ENCODE measurements at regions of chr5 and their contacts with region 1.

Region 1: DNA sequence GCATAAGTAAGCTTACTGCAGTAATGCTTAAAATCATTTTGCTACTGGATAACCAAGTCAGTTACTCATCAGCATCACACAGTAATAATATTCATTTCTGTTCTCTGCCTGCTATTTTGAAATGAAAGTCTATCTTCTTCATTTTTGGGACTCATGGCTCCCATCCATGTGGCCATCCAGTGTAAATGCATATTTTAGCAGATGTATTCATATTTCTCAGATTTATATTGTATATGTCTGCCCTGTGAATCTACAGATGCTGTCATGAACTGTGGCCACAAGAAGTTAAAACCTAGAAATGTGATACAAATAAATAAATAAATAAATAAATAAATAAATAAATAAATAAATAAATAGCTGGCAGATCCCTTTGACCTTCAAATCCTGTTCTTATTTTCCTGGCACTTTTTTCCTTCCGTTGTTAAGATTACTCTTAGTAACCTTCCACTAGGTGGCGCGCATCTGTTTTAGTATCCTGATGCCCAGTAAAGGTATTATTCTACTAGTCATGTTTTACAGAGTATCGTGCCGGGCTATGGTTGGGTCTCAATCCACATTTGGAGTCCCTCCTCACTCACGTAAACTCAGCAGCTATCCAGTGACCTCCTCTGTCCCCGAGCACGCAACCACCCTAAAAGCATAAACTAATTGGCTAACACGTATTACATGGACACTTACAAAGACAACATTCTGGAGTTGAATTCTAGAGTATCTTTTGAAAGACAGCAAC is 79.2 kb upstream of the IL7R start:
- DNase-seq: peak; percentile 88
- ATAC-seq: peak; percentile 48
- H3K4me3 Mint-ChIP-seq: peak overlapping the region; percentile 3
- H3K27ac Mint-ChIP-seq: peak overlapping the region; percentile 91
- H3K4me1 Mint-ChIP-seq: peaks cover 67% of the 10 kb centered on the region
- H3K27me3 Mint-ChIP-seq: no peaks in the 10 kb centered on the region
- CTCF ChIP-seq: peak; percentile 94

Region 2: DNA sequence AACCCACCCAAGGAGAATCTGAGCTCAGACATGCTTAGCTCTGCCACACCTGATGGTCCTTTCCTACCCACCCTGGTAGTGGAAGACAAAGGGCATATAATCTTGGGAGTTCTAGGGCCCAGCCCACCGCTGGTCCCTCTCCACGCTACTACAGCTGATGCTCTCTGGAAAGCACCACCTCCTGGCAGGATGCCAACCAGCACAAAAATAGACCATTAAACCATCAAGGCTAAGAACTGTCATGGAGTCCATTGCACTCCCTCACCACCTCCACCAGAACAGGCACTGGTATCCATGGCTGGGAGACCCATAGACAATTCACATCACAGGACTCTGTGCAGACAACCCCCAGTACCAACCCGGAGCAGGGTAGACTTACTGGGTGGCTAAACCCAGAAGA is 31.9 kb before region 1 on chr5:
- CTCF ChIA-PET with region 1: interaction called, 10 read pairs
- POLR2A ChIA-PET with region 1: no interaction called
- intact Hi-C with region 1: no loop called
- DNase-seq: peak; percentile 2
- ATAC-seq: no peak
- H3K4me3 Mint-ChIP-seq: no peak overlapping the region
- H3K27ac Mint-ChIP-seq: no peak overlapping the region
- H3K4me1 Mint-ChIP-seq: peaks cover 38% of the 10 kb centered on the region
- H3K27me3 Mint-ChIP-seq: no peaks in the 10 kb centered on the region
- CTCF ChIP-seq: no peak

Region 3: DNA sequence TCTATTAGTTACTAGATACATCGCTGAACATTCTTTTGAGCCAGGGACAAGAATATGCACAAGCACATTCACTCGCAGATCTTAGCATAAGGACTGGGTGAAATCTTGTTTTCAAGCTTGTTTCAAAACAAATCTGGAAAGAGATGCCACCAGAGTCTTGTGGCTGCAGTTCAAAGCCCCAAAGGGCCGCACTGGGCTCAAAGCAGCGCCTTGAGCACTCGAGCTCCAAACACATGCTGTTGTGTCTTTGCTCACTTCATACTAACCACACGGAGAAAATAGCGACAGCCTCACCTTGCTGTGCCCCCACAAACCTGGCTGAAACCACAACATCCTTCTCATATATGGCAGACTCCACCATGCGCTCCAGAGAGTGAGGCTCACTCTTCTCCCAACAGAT is 45.0 kb after region 1 on chr5:
- CTCF ChIA-PET with region 1: interaction called, 44 read pairs
- POLR2A ChIA-PET with region 1: interaction called, 41 read pairs
- intact Hi-C with region 1: loop called (anchors 5 kb)
- DNase-seq: peak; percentile 82
- ATAC-seq: peak; percentile 28
- H3K4me3 Mint-ChIP-seq: peak overlapping the region; percentile 55
- H3K27ac Mint-ChIP-seq: peak overlapping the region; percentile 92
- H3K4me1 Mint-ChIP-seq: peaks cover 87% of the 10 kb centered on the region
- H3K27me3 Mint-ChIP-seq: no peaks in the 10 kb centered on the region
- CTCF ChIP-seq: no peak

Region 4: DNA sequence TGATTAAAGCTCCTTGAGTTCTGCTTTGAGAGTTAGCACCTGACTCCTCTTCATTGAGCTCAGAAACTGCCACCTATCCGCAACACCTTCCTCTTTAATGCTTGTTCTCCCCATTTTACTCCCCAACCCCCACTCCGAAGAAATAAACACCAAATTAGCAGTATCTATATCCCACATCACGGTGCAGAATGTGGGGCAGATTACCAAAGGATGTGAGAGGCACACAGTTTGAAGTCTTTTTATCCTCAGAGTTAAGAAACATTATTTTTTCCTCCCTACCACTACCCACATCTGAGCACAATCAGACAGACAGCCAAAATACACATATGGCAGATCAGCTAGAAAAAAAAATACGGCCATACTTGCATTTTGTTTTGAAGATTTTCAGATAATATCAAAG is 53.1 kb after region 1 on chr5:
- CTCF ChIA-PET with region 1: interaction called, 33 read pairs
- POLR2A ChIA-PET with region 1: interaction called, 6 read pairs
- intact Hi-C with region 1: no loop called
- DNase-seq: no peak
- ATAC-seq: peak; percentile 8
- H3K4me3 Mint-ChIP-seq: peak overlapping the region; percentile 19
- H3K27ac Mint-ChIP-seq: peak overlapping the region; percentile 91
- H3K4me1 Mint-ChIP-seq: peaks cover 88% of the 10 kb centered on the region
- H3K27me3 Mint-ChIP-seq: no peaks in the 10 kb centered on the region
- CTCF ChIP-seq: no peak